ENCODE measurements at regions of chr15 and their contacts with region 1.

Region 1: GRCh38 chr15:41698779-41699178 is 38.6 kb downstream of the MGA start:
- DNase-seq: no peak
- ATAC-seq: no peak

Region 2: DNA sequence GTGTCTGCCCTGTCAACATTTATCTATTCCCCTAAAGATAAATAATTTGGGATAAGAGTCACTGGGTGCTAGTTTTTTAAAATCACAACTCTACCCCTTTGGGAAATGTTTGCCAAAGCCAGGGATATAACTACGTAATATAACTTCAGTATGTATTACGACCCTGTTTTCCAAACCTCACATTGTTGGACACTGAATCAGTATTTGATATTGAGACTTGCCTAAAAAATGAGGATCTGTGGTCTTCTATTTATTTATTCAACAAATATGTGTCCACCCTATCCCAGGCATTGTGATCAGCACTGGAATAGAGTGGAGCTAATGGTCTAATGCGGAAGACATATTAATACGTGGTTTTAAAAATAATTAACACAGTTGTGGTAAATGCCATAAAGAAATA is 43.1 kb before region 1 on chr15:
- intact Hi-C with region 1: loop called (anchors 1 kb)
- DNase-seq: no peak
- ATAC-seq: no peak

Measured in sciatic nerve (tissue), 2 donors.